Adrenal gland (tissue), 19 donors: ENCODE measurements at regions of chr3 and their contacts with region 1.

Region 1: DNA sequence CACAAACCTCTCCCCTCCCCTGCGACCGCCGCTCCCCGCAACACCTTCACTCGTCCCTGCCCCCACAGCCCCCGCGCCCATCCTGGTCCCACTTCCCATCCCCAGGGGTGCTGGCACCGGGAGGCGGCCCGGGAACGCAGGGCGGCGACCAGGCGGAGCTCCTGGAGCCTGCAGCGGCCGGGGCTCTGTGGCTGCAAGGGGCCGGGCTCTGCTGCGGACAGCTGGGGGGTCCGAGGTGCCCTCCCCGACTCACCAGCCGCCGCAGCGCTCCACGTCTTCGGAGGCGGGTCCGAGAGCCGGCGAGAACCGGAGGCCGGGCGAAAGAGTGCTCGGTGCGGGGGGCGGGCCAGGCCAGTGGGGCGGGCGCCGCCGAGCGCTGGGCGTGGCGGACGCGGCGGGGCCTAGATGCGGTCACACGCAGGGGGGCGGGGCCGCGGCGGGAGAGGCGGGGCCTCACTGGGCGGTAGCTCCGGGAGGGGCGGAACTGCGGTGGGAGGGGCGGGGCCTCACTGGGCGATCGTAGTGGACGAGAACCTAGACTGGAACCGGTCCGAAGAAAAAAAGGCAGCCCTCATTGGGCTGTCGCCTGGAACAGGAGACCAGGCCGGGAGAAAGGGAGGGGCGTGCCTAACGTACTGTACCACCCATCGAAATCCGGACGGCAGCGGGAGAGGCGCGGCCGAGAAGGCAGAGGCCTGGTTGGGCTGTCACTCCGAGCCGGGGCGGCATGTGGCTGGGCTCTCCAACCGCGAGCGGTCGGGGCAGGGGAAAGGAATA is at the start of gene ANO10:
- DNase-seq: peak; percentile 99 to 100 (median 99)
- H3K4me3 ChIP-seq: peak within 1 kb of the TSS; percentile 83 to 99 (median 94)
- H3K27ac ChIP-seq: peak within 1 kb of the TSS in 4 of 5 donors; percentile 16 to 83 (median 78)
- H3K4me1 ChIP-seq: peaks cover 0 to 10% of the 10 kb centered on the region in 2 donors
- H3K27me3 ChIP-seq: no peaks in the 10 kb centered on the region
- CTCF ChIP-seq: peak in 1 of 6 experiments; percentile 8
- POLR2A ChIP-seq: peak; percentile 55 to 66
- total RNA-seq, gene ANO10: 11.0 to 32.9 (median 23.5) TPM

Region 2: GRCh38 chr3:43690400-43691119 is 68.7 kb after region 1 on chr3 and contains the start of gene ABHD5:
- intact Hi-C with region 1: loop called in 1 of 2 experiments (anchors 10 kb)
- DNase-seq: peak; percentile 88 to 94 (median 89)
- H3K4me3 ChIP-seq: peak within 1 kb of the TSS; percentile 32 to 94 (median 64)
- H3K27ac ChIP-seq: peak within 1 kb of the TSS; percentile 66 to 95 (median 85)
- H3K4me1 ChIP-seq: peaks cover 7 to 31% of the 10 kb centered on the region in 2 donors
- H3K27me3 ChIP-seq: no peaks in the 10 kb centered on the region
- CTCF ChIP-seq: peak in 2 of 6 experiments; percentile 11 to 44
- POLR2A ChIP-seq: peak; percentile 100
- total RNA-seq, gene ABHD5: 18.4 to 43.4 (median 22.6) TPM

Region 3: GRCh38 chr3:43838877-43839276 is 217.0 kb after region 1 on chr3:
- intact Hi-C with region 1: no loop called
- DNase-seq: no peak
- H3K4me3 ChIP-seq: no peak overlapping the region
- H3K27ac ChIP-seq: no peak overlapping the region
- H3K4me1 ChIP-seq: no peaks in the 10 kb centered on the region
- H3K27me3 ChIP-seq: no peaks in the 10 kb centered on the region
- CTCF ChIP-seq: no peak
- POLR2A ChIP-seq: no peak